A673 (cell line): ENCODE measurements at regions of chr9 and their contacts with region 1.

Region 1: DNA sequence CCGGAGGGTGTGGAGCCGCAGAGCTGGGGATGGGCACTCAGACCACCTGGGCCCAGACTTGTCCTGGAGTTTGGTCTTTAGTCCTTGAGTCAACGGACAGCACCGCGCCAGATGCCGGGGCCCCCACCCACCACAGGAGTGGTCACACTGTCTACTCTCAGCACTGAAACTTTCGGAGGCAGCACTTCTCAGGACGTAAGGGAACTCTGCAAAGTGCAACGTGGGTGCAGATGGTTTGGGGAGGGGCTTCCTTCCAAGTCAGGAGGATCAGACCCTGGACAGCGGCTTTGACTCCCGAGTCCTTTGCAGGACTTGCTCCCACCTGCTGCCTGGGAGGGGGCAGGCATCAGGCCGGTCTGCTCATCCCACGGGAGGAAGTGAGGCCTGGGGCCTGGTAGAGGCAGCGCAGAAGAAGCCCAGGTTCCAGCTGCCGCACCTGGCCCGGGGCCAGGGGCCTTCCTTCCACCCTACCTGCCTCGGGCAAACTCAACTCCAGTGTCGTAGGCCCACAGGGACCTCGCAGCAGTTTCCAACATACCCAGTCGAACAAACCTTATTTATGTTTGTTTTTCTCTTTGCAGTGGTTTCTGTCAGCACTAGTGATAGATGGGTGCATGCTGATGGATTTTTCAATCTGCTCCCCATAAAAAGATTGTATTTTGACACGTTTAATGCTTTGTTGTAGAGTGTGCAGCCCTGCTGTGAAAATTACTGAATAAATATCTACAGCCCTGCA is 149.8 kb upstream of the PPP1R26 start:
- DNase-seq: peak; percentile 62
- H3K4me3 ChIP-seq: no peak overlapping the region
- H3K27ac ChIP-seq: peak overlapping the region; percentile 91
- H3K4me1 ChIP-seq: peaks cover 45% of the 10 kb centered on the region
- H3K27me3 ChIP-seq: no peaks in the 10 kb centered on the region
- CTCF ChIP-seq: no peak

Region 2: DNA sequence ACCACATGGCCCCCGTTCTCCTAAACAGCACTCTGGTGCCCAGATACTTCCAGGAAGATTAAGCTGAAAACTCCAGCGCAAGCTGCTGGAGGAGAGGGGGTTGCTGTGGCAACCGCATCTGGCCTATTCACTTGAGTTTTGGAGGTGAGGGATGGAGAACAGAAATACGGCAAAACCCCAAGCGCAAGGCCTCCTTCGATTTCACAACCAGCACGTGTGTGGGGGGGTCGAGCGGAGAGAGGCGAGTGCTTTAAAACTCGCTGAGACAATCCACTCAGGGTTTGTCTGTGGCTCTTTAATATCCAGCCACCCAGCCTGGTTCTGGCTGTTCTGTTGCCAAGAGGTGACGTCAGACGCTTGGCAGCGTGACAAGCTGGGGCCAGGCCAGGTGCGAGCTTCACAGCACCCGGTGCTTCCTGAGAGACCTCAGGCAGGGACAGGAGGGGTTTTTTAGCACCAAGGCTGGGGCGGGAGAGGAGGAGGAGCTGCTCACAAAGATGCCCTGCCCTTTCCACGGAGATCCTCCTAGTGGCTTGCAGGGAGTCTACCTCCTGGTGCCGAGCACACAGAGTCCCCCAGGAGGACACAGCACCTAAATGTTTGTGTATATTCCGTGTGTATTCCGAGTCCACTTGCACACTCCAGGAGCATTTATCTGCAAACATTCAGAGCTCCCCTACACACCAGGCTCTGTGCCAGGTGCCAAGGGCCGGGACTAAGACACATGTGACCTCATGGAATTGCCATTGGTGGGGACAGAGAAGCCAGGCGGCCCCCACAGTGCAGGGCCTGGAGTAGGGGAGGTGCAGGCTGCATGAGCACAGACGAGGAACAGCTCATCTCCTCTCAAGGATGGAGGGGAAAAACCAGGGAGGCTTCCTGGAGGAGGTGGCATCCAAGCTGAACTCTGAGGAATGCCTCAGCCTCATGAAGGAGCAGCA is 47.7 kb before region 1 on chr9:
- CTCF ChIA-PET with region 1: no interaction called
- POLR2A ChIA-PET with region 1: no interaction called
- intact Hi-C with region 1: loop called (anchors 5 kb)
- DNase-seq: peak; percentile 51
- H3K4me3 ChIP-seq: no peak overlapping the region
- H3K27ac ChIP-seq: no peak overlapping the region
- H3K4me1 ChIP-seq: peaks cover 10% of the 10 kb centered on the region
- H3K27me3 ChIP-seq: no peaks in the 10 kb centered on the region
- CTCF ChIP-seq: no peak

Region 3: DNA sequence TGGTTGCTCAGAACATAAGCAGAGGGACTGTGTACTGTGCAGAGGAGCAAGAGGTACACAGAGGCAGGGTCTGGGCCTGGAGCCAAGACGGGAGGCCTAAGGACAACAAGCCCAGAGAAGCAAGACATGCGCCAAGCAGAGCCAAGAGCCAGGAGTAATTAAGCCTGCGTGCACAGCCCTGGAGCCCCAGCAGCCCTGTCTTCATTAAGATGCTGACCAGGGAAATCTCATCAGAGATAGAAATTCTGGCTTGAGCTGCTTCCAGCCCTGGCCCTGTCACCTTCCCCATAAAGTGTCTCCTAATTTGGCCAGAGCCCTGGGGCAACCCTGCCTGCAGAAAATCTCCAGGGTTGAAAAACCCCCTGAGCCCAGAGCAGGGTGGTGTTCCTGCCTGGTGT is 65.6 kb after region 1 on chr9:
- CTCF ChIA-PET with region 1: no interaction called
- POLR2A ChIA-PET with region 1: no interaction called
- intact Hi-C with region 1: no loop called
- DNase-seq: no peak
- H3K4me3 ChIP-seq: no peak overlapping the region
- H3K27ac ChIP-seq: no peak overlapping the region
- H3K4me1 ChIP-seq: no peaks in the 10 kb centered on the region
- H3K27me3 ChIP-seq: no peaks in the 10 kb centered on the region
- CTCF ChIP-seq: no peak